Left lung (tissue), 14 donors: ENCODE measurements at regions of chr13 and their contacts with region 1.

Region 1: DNA sequence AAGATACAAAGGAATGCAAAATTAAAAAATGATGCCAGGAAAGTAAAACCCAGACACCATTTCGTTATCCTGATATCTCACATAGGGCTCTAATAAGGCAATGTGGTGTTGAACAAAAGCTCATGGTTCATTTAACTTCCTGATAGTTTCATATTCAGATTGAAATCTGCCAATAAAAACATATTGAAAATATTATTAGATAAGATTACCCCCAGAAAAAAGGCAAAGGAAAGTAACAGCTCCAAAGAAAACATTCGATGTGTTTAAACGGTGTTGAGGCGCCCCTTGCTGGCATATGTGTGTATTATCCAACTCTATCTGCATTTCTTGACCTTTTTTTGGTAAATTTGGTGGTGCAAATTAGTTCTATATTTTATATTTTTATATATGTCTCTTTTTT is 75.9 kb downstream of the ESD start:
- DNase-seq: peak in 2 of 4 donors; percentile 35 to 59
- ATAC-seq: peak; percentile 78
- H3K4me3 ChIP-seq: no peak overlapping the region
- H3K27ac ChIP-seq: no peak overlapping the region
- H3K4me1 ChIP-seq: peaks cover 0 to 5% of the 10 kb centered on the region in 2 donors
- H3K27me3 ChIP-seq: no peaks in the 10 kb centered on the region
- CTCF ChIP-seq: peak; percentile 57 to 59

Region 2: DNA sequence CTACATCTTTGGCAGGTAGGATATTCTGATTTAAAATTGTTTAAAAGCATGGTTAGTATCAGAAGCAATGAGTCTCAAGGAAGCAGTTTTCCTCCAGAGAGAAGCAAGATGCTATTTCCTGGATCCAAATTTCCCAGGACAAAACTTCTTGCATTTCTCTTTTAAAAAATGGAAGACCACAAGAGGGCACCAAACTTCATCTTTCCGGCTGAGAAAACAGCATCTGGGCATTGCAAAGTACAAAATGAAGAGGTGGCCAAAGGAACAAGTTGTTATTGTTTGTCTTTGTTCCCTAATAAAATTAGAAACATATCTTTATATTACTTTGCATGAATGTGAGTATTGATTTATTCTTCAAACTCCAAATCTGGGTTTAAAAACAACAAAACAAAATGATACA is 228.1 kb before region 1 on chr13:
- intact Hi-C with region 1: loop called in 1 of 2 experiments (anchors 5 kb)
- DNase-seq: peak in 2 of 4 donors; percentile 54 to 68
- ATAC-seq: peak; percentile 58
- H3K4me3 ChIP-seq: no peak overlapping the region
- H3K27ac ChIP-seq: no peak overlapping the region
- H3K4me1 ChIP-seq: peaks cover 0 to 11% of the 10 kb centered on the region in 2 donors
- H3K27me3 ChIP-seq: no peaks in the 10 kb centered on the region
- CTCF ChIP-seq: peak; percentile 45 to 47

Region 3: DNA sequence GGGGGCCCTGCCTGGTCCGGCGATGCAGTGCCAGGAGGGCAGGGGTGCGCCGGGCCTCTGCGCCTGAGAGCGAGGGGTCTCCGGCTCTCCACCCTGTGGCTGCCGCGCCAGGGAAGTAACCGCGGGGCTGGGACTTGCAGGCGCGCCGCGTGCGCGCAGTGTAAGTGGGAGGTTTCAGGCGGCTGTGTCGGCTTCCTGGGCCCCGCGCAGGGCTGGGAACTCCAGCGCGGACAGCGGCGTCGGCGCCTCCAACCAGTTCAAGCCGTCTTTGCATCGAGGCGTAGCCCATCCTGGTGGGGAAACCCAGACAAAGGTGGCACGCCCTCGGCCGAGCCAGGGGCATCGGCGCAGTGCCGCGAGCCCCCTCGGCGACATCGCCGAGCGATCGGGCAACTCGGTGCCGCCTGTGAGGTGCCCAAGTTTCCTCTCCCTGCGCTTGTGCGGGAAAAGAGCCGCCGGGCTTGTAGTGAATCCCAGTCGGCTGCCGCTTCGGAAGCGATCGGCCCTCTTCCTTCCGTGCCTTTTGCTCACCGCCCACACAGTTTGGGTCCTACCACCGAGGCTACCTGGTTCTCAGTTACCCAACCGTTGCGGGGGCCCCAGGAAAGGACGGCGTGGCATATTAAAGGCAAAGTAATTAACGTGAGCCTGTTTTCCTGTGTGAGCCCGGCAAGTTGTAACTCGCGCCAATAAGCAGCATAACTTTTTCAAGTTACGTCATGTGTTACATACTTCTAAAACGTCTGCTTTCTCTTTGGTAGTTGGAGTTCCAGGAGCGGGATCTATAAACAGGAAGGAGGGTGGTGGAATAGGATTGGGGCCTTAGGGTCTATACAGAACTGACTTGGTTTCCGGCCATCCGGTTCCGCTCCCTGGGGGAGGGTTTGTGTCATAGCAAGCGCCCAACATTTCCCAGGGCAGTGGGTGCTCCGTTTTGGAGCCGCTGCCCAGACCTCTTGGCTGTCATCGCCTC is 166.9 kb before region 1 on chr13:
- intact Hi-C with region 1: loop called in 1 of 2 experiments (anchors 2 kb)
- DNase-seq: peak; percentile 77 to 95 (median 86)
- ATAC-seq: peak; percentile 72
- H3K4me3 ChIP-seq: peak overlapping the region; percentile 96 to 97
- H3K27ac ChIP-seq: peak overlapping the region; percentile 86 to 92
- H3K4me1 ChIP-seq: peaks cover 9 to 40% of the 10 kb centered on the region in 2 donors
- H3K27me3 ChIP-seq: no peaks in the 10 kb centered on the region
- CTCF ChIP-seq: peak in 1 of 2 donors; percentile 44

Region 4: GRCh38 chr13:46595136-46595886 is 125.7 kb before region 1 on chr13:
- intact Hi-C with region 1: no loop called
- DNase-seq: no peak
- ATAC-seq: peak; percentile 66
- H3K4me3 ChIP-seq: no peak overlapping the region
- H3K27ac ChIP-seq: peak overlapping the region; percentile 20 to 56
- H3K4me1 ChIP-seq: peaks cover 0 to 58% of the 10 kb centered on the region in 2 donors
- H3K27me3 ChIP-seq: no peaks in the 10 kb centered on the region
- CTCF ChIP-seq: no peak